Activated CD4-positive, alpha-beta memory T cell treated with anti-CD3 and anti-CD28 coated beads for 36 hours (primary cell): ENCODE measurements at regions of chr2 and their contacts with region 1.

Region 1: DNA sequence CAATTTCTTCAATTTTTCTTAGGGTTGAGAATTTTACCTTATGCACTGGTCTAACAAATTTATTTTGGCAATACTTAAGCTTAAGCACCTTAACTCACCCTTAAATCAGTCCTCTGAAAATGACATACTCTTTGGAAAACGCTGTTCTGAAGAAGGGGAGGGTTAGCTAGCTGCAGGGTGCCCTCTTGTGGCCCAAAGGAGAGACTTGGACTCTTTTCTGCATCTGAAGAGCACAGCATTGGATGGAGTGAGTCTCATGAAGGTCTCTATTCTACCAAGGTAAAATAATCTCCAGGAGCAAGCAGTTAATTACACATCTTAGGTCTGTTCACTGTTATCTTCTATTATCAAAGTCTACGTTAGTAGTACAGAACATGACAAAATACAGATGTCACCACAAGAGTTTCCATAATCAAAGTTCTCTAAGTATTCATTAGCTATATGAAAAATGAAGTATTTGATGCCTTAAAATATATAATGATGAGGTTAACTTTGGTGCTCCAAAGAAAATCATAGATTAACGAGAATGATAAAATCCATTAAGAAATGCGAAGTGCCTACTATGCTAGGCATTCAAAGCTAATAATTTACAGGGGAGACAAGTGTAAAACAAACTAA is 24.4 kb downstream of the PUM2 start:
- DNase-seq: peak; percentile 66
- H3K4me3 Mint-ChIP-seq: no peak overlapping the region
- H3K27ac Mint-ChIP-seq: peak overlapping the region; percentile 32
- H3K4me1 Mint-ChIP-seq: peaks cover 71% of the 10 kb centered on the region
- H3K27me3 Mint-ChIP-seq: no peaks in the 10 kb centered on the region

Region 2: GRCh38 chr2:19702267-19702666 is 624.0 kb before region 1 on chr2:
- CTCF ChIA-PET with region 1: no interaction called
- POLR2A ChIA-PET with region 1: no interaction called
- intact Hi-C with region 1: no loop called
- DNase-seq: no peak
- H3K4me3 Mint-ChIP-seq: no peak overlapping the region
- H3K27ac Mint-ChIP-seq: no peak overlapping the region
- H3K4me1 Mint-ChIP-seq: no peaks in the 10 kb centered on the region
- H3K27me3 Mint-ChIP-seq: peaks cover 3% of the 10 kb centered on the region

Region 3: DNA sequence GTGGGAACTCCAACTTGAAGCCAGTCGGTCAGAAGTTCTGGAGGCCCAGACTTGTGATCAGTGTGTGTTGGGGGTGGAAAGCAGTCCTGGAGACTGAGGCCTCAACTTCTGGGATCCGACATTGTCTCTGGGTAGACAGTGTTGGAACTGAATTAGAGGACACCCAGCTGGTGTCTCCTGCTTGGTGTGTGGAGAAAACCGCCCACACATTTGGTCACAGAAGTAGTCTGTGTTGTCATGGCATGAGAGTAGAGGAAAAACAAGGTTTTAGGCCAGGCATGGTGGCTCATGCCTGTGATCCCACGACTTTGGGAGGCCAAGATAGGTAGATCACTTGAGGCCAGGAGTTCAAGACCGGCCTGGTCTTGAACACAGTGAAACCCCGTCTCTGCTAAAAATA is 27.2 kb before region 1 on chr2:
- CTCF ChIA-PET with region 1: interaction called, 25 read pairs
- POLR2A ChIA-PET with region 1: no interaction called
- intact Hi-C with region 1: no loop called
- DNase-seq: no peak
- H3K4me3 Mint-ChIP-seq: no peak overlapping the region
- H3K27ac Mint-ChIP-seq: peak overlapping the region; percentile 58
- H3K4me1 Mint-ChIP-seq: peaks cover 18% of the 10 kb centered on the region
- H3K27me3 Mint-ChIP-seq: no peaks in the 10 kb centered on the region

Region 4: DNA sequence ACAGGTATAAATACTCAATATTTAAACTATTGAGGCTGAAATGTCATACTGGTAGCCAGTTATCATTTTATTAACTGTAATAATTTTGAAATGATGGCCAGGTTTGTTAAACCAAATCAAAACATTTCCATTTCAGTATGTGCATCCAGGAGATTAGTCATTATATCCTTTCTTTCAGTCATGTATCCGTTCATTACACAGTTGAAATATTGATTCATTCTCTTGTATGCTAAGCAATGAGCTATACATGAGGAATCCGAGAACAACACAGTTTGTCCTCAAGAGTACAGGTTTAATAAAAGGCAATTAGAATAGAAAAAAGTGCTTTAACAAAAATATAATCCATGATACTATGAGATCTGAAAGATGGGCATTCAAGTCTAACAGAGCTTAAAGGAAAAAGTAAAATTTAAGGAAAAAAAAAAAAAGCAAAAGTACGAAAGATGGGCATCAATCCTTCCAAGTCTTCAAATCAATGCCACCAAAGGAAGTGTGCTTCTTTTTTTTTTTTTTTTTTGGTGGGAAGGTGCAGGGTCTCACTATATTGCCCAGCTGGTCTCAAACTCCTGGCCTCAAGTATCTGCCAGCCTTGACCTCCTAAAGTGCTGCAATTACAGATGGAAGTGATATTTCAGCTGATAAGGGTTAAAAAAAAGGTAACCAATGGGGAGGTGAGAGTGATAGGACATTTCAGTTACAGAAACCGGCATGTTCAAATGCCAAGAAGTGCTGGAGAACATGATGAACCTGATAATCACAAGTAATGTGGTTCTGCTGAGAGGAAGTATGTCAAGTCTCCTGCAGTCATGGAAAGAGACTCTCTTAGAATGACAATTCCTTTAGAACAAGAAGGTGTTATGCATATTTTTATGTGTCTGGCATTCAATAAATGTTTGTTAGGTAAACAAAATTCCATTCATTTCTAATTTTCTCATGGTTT is 11.4 kb before region 1 on chr2:
- CTCF ChIA-PET with region 1: interaction called, 38 read pairs
- POLR2A ChIA-PET with region 1: no interaction called
- intact Hi-C with region 1: no loop called
- DNase-seq: no peak
- H3K4me3 Mint-ChIP-seq: no peak overlapping the region
- H3K27ac Mint-ChIP-seq: peak overlapping the region; percentile 60
- H3K4me1 Mint-ChIP-seq: peaks cover 32% of the 10 kb centered on the region
- H3K27me3 Mint-ChIP-seq: no peaks in the 10 kb centered on the region

Region 5: DNA sequence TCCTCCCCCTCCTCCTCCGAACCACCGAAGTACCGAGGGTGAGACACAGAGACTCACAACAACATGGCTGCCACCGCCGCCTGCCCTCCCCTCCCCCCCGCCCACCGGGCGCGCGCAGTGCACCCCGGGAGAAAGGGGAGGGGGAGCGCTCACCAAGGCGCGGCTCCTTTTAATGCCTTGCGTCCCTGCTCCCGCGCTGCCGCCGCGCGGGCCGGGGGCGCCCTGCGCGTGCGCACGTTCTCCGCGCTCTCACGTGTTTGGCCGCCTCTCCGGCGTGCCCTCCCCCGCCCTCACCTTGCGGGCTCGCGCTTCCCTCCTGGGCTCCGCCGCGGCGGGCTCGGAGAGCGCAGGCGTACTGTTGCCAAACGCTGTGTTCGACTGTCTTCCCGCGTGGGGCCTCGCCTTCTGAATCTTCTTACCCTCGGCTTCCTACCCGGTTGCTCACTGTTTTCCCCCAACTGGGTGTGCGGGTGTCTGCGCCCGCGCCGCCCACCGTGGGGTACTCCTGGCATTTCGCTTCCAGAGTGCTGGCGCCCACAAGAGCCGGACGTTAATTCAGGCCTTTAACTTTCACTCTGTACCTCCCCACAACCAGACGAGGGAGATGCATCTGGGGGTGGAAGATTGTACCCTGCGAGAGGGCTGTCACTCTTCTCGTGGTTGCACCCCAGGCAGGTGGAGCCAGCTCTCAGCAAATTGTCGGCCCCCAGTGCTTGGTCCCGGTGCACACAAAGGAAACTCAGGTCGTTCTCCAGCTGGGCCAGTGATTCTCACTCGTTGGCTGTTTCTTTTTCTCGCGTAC is 24.7 kb after region 1 on chr2 and contains the start of gene PUM2:
- CTCF ChIA-PET with region 1: interaction called, 52 read pairs
- POLR2A ChIA-PET with region 1: interaction called, 4 read pairs
- intact Hi-C with region 1: loop called (anchors 2 kb)
- DNase-seq: peak; percentile 97
- H3K4me3 Mint-ChIP-seq: no peak within 1 kb of the TSS
- H3K27ac Mint-ChIP-seq: peak within 1 kb of the TSS; percentile 93
- H3K4me1 Mint-ChIP-seq: peaks cover 31% of the 10 kb centered on the region
- H3K27me3 Mint-ChIP-seq: no peaks in the 10 kb centered on the region
- total RNA-seq, gene PUM2: 122 TPM

Region 6: DNA sequence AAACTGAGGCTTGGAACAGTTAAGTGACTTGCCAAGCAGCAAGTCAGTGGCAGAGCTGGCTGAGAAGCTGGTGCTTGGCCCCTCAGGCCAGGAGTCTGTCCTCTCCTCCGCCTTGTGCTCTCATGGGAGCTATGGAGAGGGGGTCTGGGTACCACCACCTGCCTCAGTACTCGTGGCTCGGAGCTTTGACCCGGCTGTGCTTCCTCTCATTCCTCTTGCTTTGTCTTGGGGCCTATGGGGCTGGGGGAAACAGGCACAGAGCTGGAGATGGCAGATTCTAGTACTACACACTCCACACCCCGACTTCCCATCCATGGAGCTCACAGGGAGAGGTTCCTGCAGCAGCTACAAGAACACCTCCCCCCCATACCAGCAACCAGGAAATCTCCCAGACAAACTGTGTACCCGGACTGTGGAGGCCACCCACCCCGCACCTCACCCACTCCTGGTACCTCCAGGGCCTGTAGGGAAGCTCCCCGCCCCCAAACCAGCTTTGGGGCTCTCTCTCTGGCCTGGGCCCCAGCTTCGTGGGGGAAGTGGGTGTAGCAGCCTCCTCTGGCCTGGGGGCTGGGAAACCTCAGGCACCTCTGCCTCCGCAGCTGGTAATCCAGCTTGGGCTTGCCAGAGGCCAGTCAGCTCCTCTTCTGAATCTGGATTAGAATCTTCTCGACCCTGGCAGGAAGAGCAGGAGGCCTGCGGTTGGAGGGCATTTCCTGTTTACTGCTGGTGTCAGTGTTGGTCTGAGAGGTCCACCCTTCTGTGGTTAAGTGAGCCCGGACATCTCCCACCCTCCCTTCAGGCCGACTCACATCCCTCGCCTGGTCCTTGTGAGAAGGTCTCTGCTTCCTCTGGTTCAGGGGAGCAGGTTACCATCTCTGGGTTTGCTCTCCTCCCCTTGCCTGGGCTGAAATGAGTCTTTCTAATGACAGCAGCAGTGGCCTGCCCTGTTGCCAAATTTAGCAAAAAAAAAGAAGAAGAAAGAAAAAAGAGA is 98.3 kb after region 1 on chr2:
- CTCF ChIA-PET with region 1: interaction called, 14 read pairs
- POLR2A ChIA-PET with region 1: interaction called, 4 read pairs
- intact Hi-C with region 1: no loop called
- DNase-seq: peak; percentile 48
- H3K4me3 Mint-ChIP-seq: no peak overlapping the region
- H3K27ac Mint-ChIP-seq: no peak overlapping the region
- H3K4me1 Mint-ChIP-seq: peaks cover 16% of the 10 kb centered on the region
- H3K27me3 Mint-ChIP-seq: no peaks in the 10 kb centered on the region